Cardiac septum (tissue), 1 donor: ENCODE measurements at regions of chr10 and their contacts with region 1.

Region 1: GRCh38 chr10:71212318-71213126 is at the start of gene UNC5B:
- DNase-seq: peak; percentile 93
- total RNA-seq, gene UNC5B: 22.4 TPM

Region 2: GRCh38 chr10:70903262-70903921 is 309.1 kb before region 1 on chr10:
- intact Hi-C with region 1: loop called (anchors 5 kb)
- DNase-seq: no peak

Region 3: GRCh38 chr10:70925377-70926225 is 286.9 kb before region 1 on chr10:
- intact Hi-C with region 1: loop called (anchors 2 kb)
- DNase-seq: no peak

Region 4: DNA sequence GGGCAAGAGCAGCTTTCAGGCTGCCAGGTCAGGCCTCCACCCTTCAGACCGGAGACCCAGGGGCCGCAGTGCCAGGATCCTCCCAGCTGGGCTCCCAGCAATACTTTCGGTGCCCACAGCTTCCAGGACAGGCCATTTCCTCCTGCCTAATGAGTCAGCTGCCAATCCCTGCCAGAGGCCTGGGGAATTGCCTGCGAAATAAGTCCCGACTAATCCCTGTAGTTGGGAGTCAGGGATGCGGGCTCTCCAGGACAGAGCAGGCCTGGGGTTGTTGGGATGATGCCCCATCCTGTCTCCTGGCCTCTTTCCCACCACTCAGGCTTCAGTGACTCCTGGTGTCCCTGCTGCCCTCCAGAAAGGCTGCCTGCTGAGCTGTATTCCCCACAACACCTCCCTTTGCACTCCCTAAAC is 143.7 kb before region 1 on chr10:
- intact Hi-C with region 1: loop called (anchors 5 kb)
- DNase-seq: peak; percentile 86

Region 5: GRCh38 chr10:71234970-71235685 is 22.6 kb after region 1 on chr10:
- intact Hi-C with region 1: loop called (anchors 1 kb)
- DNase-seq: peak; percentile 85

Region 6: DNA sequence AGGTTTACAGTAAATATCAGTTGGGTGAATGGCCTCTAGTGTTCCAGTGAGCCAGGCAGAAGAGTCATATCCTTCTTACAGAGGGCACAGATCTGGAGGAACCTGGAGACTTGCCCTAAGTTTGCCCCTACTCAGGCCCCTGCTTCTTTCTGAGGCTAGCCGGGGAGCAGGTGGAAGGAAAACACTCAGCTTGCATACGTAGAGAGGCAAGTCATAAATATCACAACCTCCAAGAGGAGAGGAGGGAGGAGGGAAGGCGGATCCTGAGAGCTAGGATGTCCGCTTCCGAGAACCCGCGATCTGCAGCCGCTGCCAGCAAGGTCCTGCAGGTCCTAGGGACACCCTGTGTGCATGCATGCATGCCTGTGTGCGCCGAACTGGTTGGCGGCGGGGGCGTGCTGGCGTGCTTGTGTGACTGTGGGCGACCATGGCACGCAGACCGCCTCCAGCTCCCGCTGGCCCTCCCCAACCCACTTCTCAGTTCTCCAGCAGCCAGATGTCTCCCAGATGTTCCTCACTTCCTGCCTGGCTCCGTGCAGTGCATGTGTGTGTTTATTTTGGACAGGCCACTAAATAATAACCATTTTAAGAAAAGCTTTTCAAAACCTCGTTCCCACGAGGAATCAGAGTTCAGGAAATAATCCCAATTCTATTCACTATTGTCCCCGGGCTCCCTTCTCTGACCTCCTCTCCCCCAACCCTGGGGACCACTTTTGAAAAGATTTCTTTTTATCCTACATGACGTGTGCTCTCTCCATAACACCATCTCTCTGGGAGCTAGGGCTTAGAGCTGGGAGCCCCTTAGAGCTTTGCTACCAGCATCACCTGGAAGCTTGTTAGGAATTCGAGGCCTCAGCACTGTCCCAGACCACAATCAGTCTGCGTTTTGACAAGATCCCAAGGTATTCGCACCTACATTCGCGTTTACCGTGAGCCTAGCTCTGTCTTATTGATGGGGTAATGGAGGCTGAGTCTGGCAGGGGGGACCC is 32.2 kb after region 1 on chr10:
- intact Hi-C with region 1: loop called (anchors 5 kb)
- DNase-seq: peak; percentile 87

Region 7: DNA sequence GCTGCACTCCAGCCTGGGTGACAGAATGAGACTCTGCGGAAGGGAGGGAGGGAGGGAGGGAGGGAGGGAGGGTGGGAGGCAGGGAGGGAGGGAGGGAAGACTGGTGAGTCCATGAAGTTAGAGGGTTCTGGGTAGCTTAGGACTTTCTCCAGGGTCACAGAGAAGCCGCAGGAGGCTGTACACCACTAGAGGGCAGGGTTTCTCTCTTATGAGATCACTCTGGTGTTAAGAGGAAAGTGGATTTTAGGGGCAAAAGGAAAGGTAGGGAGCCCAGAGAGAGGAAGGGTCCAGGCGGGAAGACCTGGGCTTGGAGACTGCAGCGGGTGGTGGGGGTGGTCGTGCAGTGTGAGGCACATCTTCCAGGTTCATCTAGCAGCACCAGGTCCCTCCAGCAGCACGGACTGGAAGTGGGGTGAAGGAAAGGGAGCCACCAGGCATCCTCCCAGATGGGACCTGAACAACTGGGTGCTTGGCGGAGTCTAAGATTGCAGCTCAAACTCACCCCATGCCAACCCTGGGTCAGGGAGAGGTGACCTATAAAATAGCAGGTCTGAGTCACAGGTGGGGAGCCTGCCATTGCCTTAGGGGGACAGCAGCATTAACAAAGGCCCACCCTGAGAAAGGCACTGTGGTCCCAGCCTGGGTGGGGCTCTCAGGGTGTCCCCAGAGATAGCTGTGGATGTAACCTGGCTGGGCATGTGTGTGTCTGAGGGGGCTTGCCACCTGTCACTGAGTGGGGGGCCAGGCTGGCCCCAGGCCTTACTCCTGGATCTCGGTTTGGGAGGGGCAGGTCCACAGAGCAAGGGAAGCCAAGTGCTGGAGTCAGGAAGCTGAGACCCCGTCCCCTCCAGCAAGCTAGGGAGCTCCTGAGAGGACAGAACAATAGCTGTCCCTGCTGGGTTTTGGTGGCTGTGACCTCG is 58.0 kb after region 1 on chr10:
- intact Hi-C with region 1: loop called (anchors 2 kb)
- DNase-seq: no peak